K562 (cell line): ENCODE measurements at regions of chr15 and their contacts with region 1.

Region 1: GRCh38 chr15:52193791-52194190 is 2.6 kb upstream of the GNB5 start:
- DNase-seq: no peak
- ATAC-seq: no peak
- H3K4me3 ChIP-seq: no peak overlapping the region
- H3K27ac ChIP-seq: no peak overlapping the region
- H3K4me1 ChIP-seq: no peaks in the 10 kb centered on the region; a peak in 1 of 5 replicates
- H3K27me3 ChIP-seq: peaks cover 26 to 35% of the 10 kb centered on the region in 2 experiments
- CTCF ChIP-seq: no peak
- EP300 ChIP-seq: no peak
- POLR2A ChIP-seq: no peak
- RAD21 ChIP-seq: no peak

Region 2: DNA sequence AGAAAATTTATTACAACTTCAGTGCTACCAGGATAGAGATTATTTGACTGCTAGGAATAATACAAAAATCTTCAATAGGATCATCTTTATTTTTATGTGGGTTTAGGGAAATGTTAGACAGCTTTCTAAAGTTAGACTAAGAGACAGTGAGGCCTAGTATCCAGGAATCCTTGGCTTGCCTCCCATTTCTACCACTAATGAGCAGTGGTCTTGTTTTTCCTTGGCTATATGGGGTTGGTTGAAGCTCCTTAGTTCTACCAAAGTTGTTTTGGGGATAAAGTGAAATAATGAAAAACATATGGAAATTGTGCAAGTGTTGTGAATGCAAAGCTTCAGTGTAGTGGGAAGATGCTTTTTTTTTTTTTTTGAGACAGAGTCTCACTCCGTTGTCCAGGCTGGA is 1268.5 kb before region 1 on chr15:
- CTCF ChIA-PET with region 1: no interaction called
- POLR2A ChIA-PET with region 1: no interaction called
- in situ Hi-C with region 1: no loop called
- intact Hi-C with region 1: no loop called
- DNase-seq: no peak
- ATAC-seq: no peak
- H3K4me3 ChIP-seq: no peak overlapping the region
- H3K27ac ChIP-seq: no peak overlapping the region
- H3K4me1 ChIP-seq: no peaks in the 10 kb centered on the region
- H3K27me3 ChIP-seq: no peaks in the 10 kb centered on the region
- CTCF ChIP-seq: no peak
- EP300 ChIP-seq: no peak
- POLR2A ChIP-seq: no peak
- RAD21 ChIP-seq: no peak

Region 3: GRCh38 chr15:52183562-52184173 is 10.1 kb before region 1 on chr15:
- CTCF ChIA-PET with region 1: no interaction called
- POLR2A ChIA-PET with region 1: interaction called, 10 read pairs
- in situ Hi-C with region 1: no loop called
- intact Hi-C with region 1: no loop called
- DNase-seq: peak; percentile 33 to 51 (median 42)
- ATAC-seq: peak; percentile 45; the same call in 2 of the 3 replicates
- H3K4me3 ChIP-seq: no peak overlapping the region
- H3K27ac ChIP-seq: no peak overlapping the region
- H3K4me1 ChIP-seq: peaks cover 2 to 15% of the 10 kb centered on the region in 2 experiments; a peak in 3 of 5 replicates
- H3K27me3 ChIP-seq: peaks cover 20 to 38% of the 10 kb centered on the region in 2 experiments
- CTCF ChIP-seq: peak; percentile 70 to 71 (median 70)
- EP300 ChIP-seq: no peak
- POLR2A ChIP-seq: no peak
- RAD21 ChIP-seq: peak in 1 of 2 experiments; percentile 58; a peak in 2 of 4 replicates

Region 4: DNA sequence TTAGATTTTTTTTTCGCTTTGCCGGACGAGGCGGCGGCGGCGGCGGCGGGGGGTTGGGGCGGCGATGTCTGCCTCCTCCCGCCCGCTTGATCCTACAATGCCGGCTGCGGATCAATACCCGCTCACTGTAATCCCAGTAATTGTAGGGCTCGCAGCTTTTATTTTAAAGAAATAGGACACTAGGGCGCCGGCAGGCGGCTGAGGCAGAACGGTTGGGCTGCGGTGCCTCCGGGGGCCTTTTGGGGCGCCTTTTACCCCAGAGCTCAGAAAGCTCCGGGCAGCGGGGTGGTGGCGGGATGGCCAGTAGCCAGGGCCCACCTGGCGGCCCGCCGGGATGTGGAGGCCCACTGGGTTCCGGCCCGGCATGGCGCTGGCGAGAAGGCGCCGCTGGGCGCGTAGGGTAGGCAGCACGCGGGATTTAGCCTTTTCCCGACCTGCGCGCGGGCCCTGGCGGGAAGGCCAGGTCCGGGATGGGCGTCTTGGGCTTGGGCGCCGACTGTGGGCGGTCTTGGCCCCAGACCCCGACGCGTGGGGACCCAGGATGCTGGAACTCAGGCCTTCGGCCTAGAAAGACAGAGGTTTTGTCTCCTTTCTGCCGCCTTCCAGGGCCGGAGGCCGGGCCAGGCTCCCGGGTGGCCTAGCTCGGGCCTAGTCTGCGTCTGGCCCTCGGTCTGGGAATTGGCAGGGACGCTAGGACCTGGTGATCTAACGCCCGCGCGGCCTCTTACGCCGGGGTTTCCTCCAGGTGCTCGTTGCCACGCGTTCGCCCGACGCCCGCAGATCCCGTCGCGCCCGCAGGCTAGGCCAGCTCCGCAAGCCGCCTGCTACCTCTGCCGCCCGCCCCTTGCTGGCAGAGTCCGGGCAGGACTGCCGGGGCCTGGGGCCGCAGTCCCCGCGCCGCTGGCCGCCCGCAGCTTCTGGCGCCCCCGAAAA is 611.8 kb after region 1 on chr15:
- CTCF ChIA-PET with region 1: no interaction called
- POLR2A ChIA-PET with region 1: no interaction called
- in situ Hi-C with region 1: no loop called
- intact Hi-C with region 1: no loop called
- DNase-seq: no peak
- ATAC-seq: peak; percentile 40; the same call in 2 of the 3 replicates
- H3K4me3 ChIP-seq: no peak overlapping the region
- H3K27ac ChIP-seq: no peak overlapping the region
- H3K4me1 ChIP-seq: peaks cover 0 to 17% of the 10 kb centered on the region in 2 experiments; a peak in 1 of 5 replicates
- H3K27me3 ChIP-seq: peaks cover 22 to 34% of the 10 kb centered on the region in 2 experiments; a peak in 3 of 5 replicates
- CTCF ChIP-seq: peak in 1 of 3 experiments; percentile 33; a peak in 2 of 6 replicates
- EP300 ChIP-seq: no peak
- POLR2A ChIP-seq: no peak
- RAD21 ChIP-seq: no peak